ENCODE measurements at regions of chr11 and their contacts with region 1.

Region 1: GRCh38 chr11:66126808-66127555 is 56.9 kb downstream of the PACS1 start:
- DNase-seq: peak; percentile 80
- H3K4me3 Mint-ChIP-seq: peak overlapping the region; percentile 68
- H3K27ac Mint-ChIP-seq: peak overlapping the region; percentile 89
- H3K4me1 Mint-ChIP-seq: peaks cover 73% of the 10 kb centered on the region
- H3K27me3 Mint-ChIP-seq: no peaks in the 10 kb centered on the region

Region 2: DNA sequence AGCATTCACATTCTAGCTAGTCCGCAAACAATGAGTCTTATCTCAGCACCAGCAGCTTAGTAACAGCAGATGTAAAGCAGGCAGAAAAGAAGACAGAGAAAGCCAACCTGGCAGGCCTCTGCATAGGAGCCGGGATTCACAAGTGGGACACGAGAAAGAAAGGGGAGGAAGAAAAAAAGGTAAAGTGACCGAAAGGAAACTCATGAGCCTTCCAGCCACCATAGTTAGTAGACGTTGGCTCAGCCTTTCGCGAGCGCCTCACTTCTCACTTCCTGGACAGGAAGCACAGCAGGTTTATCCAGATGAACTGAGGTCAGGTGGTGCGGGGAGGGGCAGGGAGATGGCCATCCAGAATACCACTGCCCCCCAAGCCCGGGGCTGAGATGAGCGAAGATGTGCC is 434.6 kb before region 1 on chr11:
- CTCF ChIA-PET with region 1: no interaction called
- POLR2A ChIA-PET with region 1: no interaction called
- intact Hi-C with region 1: no loop called
- DNase-seq: no peak
- H3K4me3 Mint-ChIP-seq: no peak overlapping the region
- H3K27ac Mint-ChIP-seq: no peak overlapping the region
- H3K4me1 Mint-ChIP-seq: no peaks in the 10 kb centered on the region
- H3K27me3 Mint-ChIP-seq: no peaks in the 10 kb centered on the region

Region 3: DNA sequence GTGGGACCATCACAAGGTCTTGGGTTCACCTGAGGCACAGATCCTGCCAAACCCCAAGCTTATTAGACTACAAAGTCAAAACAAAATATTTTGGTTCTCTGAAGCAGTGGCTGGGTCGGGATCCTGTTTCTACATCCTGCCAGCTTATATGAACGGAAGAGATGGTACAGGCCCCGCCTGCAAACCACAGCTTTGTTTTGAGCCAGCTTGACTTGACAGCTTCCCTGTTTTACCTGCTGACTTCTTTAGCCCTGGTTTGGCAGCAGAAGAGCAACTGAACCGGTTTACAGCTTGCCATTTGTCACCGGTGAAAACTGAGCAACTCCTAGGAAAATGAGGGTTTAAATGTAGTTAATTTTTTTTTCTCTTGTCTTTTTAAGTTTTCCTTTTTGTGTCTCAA is 45.5 kb before region 1 on chr11:
- CTCF ChIA-PET with region 1: interaction called, 6 read pairs
- POLR2A ChIA-PET with region 1: interaction called, 4 read pairs
- intact Hi-C with region 1: loop called (anchors 2 kb)
- DNase-seq: peak; percentile 86
- H3K4me3 Mint-ChIP-seq: peak overlapping the region; percentile 73
- H3K27ac Mint-ChIP-seq: peak overlapping the region; percentile 95
- H3K4me1 Mint-ChIP-seq: peaks cover 88% of the 10 kb centered on the region
- H3K27me3 Mint-ChIP-seq: no peaks in the 10 kb centered on the region

Region 4: GRCh38 chr11:66100272-66101065 is 26.5 kb before region 1 on chr11:
- CTCF ChIA-PET with region 1: interaction called, 4 read pairs
- POLR2A ChIA-PET with region 1: no interaction called
- intact Hi-C with region 1: loop called (anchors 1 kb)
- DNase-seq: peak; percentile 77
- H3K4me3 Mint-ChIP-seq: peak overlapping the region; percentile 66
- H3K27ac Mint-ChIP-seq: peak overlapping the region; percentile 90
- H3K4me1 Mint-ChIP-seq: peaks cover 64% of the 10 kb centered on the region
- H3K27me3 Mint-ChIP-seq: no peaks in the 10 kb centered on the region

Region 5: DNA sequence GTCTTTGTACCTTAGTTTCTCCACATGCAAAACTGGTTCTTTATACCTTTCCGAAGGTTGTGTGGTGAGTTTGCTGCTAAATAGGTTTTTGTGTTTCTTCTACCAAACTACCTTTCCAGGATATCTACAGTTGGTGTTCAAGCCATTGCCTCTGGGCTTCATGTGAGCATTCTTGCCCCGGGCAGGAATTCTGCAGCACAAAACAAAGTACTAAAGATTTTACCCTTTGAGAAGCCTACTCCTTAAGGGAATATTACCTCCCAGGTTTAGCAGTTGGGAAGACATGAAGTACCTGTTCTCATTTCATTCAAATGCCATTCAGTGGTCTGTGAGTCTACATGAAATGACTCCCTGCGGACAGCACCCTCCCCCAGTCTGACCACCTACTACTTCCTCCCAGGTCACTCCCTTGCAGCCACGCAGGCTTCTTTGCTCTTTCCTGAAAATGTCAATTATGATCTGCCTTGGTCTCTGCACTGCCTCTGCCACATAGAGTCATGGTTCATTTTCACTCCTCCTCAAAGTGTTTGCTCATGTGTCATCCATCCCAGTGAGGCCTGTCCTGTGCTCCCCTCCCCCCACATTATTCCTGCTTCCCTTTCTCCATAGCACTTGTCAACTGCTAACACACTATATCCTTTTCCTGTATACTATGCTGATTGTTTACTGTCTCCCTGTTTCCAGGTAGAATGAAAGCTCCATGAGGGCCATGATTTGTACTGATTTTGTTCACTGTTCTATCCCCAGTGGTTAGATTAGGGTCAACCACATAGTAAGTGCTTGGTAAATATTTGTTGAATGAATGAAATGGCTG is 20.0 kb before region 1 on chr11:
- CTCF ChIA-PET with region 1: interaction called, 4 read pairs
- POLR2A ChIA-PET with region 1: interaction called, 7 read pairs
- intact Hi-C with region 1: loop called (anchors 1 kb)
- DNase-seq: peak; percentile 71
- H3K4me3 Mint-ChIP-seq: peak overlapping the region; percentile 0
- H3K27ac Mint-ChIP-seq: peak overlapping the region; percentile 77
- H3K4me1 Mint-ChIP-seq: peaks cover 78% of the 10 kb centered on the region
- H3K27me3 Mint-ChIP-seq: no peaks in the 10 kb centered on the region

Region 6: GRCh38 chr11:66112601-66113098 is 14.3 kb before region 1 on chr11:
- CTCF ChIA-PET with region 1: interaction called, 6 read pairs
- POLR2A ChIA-PET with region 1: interaction called, 7 read pairs
- intact Hi-C with region 1: loop called (anchors 1 kb)
- DNase-seq: no peak
- H3K4me3 Mint-ChIP-seq: no peak overlapping the region
- H3K27ac Mint-ChIP-seq: peak overlapping the region; percentile 89
- H3K4me1 Mint-ChIP-seq: peaks cover 92% of the 10 kb centered on the region
- H3K27me3 Mint-ChIP-seq: no peaks in the 10 kb centered on the region

Region 7: GRCh38 chr11:66311965-66312548 is 185.1 kb after region 1 on chr11:
- CTCF ChIA-PET with region 1: no interaction called
- POLR2A ChIA-PET with region 1: no interaction called
- intact Hi-C with region 1: no loop called
- DNase-seq: peak; percentile 97
- H3K4me3 Mint-ChIP-seq: peak overlapping the region; percentile 77
- H3K27ac Mint-ChIP-seq: peak overlapping the region; percentile 77
- H3K4me1 Mint-ChIP-seq: peaks cover 5% of the 10 kb centered on the region
- H3K27me3 Mint-ChIP-seq: no peaks in the 10 kb centered on the region

Measured in activated CD4-positive, alpha-beta memory T cell treated with anti-CD3 and anti-CD28 coated beads for 36 hours (primary cell).